Sigmoid colon (tissue), 7 donors: ENCODE measurements at regions of chr10 and their contacts with region 1.

Region 1: DNA sequence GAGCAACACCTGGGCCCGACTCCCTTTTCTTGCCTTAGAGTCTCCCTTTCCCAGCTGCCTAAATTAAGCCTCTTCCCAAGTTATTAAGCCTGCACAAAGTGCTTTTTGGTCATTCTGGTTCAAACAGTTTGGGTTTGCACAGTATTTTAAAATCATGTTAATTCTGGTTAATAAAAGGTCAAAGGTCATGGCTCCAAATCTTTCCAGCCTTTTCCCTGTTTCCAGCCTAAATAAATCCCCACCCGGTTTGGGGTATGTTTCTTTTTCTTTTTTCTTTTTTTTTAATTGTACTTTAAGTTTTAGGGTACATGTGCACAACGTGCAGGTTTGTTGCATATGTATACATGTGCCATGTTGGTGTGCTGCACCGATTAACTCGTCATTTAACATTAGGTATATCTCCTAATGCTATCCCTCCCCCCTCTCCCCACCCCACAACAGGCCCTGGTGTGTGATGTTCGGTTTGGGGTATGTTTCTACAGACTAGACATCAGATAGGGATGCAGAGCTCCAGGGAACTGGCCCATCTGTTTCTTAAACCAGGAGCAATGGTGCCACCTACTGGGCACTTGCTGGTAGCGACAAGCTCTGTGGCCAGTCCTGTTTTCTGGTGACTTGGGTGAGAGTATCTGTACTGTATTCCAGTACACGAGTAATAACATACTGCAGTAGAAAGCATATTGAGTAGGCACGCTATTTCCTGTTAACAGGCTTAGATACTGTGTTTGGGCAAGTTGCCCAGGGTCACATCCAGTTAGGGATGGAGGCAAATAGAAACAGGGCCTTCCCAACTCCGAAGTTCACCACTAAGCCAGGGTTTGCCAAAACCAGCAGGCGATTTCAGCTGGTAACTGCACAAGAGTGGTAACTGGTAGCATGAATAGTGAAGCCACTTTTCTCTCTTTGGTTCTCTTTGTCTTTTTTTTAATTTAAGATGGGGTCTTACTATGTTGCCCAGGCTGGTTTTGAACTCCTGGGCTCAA is 60.6 kb upstream of the TRIM8 start:
- DNase-seq: peak; percentile 94
- H3K4me3 ChIP-seq: no peak overlapping the region
- H3K27ac ChIP-seq: peak overlapping the region in 1 of 4 donors; percentile 41
- H3K4me1 ChIP-seq: peaks cover 0 to 26% (median 15%) of the 10 kb centered on the region in 4 donors
- H3K27me3 ChIP-seq: no peaks in the 10 kb centered on the region
- CTCF ChIP-seq: peak; percentile 47 to 84 (median 78)
- EP300 ChIP-seq: no peak
- POLR2A ChIP-seq: no peak

Region 2: DNA sequence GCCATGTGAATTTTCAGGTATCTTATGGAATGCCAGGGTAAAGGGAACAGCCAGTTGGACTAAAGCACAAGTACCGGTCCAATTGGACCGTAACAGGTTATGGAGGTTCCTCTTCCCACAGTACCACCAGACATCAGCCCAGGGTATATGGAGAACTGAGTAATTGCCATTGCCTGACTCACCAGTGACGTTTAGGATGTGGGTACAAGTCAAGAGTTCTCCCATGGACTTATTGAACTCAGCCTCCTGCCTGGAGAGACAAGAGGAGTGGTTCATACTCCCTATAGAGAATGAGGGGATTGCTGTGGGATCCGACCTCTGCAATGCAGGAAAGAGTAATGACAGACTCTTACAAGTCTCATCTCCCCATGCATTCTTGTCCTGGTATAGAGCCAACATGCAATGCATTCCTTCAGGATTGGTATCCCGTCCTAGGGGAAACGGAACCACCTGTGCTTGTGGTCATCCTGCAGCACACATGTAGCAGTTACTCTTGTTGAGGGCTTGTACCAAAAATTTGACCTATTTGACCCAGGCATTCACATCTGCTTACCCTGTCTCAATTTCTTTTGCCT is 388.3 kb before region 1 on chr10:
- intact Hi-C with region 1: no loop called
- DNase-seq: no peak
- H3K4me3 ChIP-seq: no peak overlapping the region
- H3K27ac ChIP-seq: no peak overlapping the region
- H3K4me1 ChIP-seq: no peaks in the 10 kb centered on the region
- H3K27me3 ChIP-seq: no peaks in the 10 kb centered on the region
- CTCF ChIP-seq: no peak
- EP300 ChIP-seq: no peak
- POLR2A ChIP-seq: no peak

Region 3: GRCh38 chr10:102503281-102504220 is 80.2 kb before region 1 on chr10 and contains the start of gene SUFU:
- intact Hi-C with region 1: loop called (anchors 1 kb)
- DNase-seq: peak; percentile 99
- H3K4me3 ChIP-seq: peak within 1 kb of the TSS; percentile 81 to 97 (median 94)
- H3K27ac ChIP-seq: peak within 1 kb of the TSS; percentile 91 to 98 (median 94)
- H3K4me1 ChIP-seq: peaks cover 0 to 54% (median 47%) of the 10 kb centered on the region in 4 donors
- H3K27me3 ChIP-seq: no peaks in the 10 kb centered on the region
- CTCF ChIP-seq: peak; percentile 76 to 94 (median 84)
- EP300 ChIP-seq: no peak
- POLR2A ChIP-seq: peak in 1 of 2 donors; percentile 12
- total RNA-seq, gene SUFU: 5.0 to 10.5 (median 6.7) TPM